ENCODE measurements at regions of chr2 and their contacts with region 1.

Region 1: DNA sequence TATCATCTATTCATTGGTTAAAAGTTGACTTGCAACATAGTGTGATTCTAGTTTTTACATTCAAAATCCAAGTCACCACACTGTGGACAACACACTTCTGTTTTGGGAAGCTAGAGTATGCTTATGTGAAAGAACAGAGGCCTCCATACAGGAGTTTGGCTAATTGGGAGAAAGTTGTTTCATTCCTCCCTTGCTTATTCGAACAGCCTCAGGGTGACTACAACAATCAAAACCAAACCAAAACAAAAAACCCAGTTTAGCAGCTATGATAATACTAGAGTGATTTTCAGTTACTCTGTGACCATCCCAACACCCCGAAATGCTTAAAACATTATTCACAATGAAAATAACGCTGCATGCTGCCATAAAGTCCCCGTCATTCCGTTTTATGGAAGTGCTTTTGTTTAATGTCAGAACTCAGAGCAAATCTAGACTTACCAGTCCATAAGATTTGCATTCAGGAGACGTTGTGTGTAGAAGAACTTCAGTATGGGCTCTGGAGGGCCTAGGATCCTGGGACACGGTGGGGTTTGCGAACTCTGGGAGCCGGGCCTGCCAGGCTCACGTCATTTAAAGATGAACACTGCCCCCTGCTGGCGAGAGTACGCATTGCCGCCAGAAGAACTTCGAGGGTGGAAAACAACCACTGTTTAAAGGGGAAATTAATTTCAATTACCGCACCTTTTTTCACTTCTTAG is 111.4 kb downstream of the FTCDNL1 start:
- H3K4me3 ChIP-seq: no peak overlapping the region
- H3K27ac ChIP-seq: no peak overlapping the region
- H3K4me1 ChIP-seq: peaks cover 9% of the 10 kb centered on the region
- CTCF ChIP-seq: peak; percentile 76

Region 2: GRCh38 chr2:199488772-199489400 is 250.7 kb before region 1 on chr2:
- CTCF ChIA-PET with region 1: interaction called, 20 read pairs
- POLR2A ChIA-PET with region 1: no interaction called
- H3K4me3 ChIP-seq: no peak overlapping the region
- H3K27ac ChIP-seq: no peak overlapping the region
- H3K4me1 ChIP-seq: no peaks in the 10 kb centered on the region
- CTCF ChIP-seq: peak; percentile 28; the same call in 1 of the 2 replicates

Region 3: DNA sequence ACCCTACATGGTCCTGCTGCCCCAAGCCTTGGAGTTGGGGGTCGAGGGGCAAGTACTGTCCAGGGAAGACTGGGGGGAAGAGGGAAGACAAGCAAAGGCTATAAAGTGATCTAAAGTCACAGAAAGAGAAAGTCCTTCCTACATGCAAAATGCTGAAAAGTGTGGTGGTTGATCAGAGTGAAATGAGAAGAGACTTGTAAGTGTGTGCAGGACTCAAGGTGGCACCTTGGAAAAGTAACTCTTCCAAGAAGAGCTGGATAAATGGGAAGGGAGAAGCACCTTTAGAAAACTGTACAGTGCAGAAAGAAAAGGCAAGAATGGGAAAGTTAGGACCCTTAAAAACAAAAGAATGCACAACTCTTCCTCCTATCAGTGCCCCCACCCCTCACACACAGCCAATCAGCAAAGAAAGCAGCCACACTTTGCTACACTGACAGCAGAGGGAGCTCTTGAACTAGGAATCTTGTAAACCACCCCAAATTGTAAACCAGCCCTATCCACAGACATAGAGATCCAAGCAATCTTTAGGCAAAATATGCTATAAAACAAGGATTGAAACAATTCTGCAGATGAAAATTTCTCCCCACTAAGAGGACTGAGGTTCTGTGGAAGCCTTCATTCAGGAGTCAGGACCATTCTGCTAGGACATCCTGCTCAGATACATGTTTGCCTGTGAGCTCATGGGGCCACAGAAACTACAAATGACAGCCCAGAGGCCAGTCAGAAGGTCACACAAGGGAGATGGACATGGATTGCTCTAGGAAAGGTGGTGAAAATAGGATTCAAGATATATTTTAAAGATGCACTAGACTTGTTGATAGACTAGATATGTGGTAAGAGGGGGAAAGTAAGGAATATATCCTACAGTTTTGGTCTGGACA is 35.0 kb before region 1 on chr2:
- CTCF ChIA-PET with region 1: interaction called, 68 read pairs
- POLR2A ChIA-PET with region 1: no interaction called
- H3K4me3 ChIP-seq: no peak overlapping the region
- H3K27ac ChIP-seq: no peak overlapping the region
- H3K4me1 ChIP-seq: no peaks in the 10 kb centered on the region
- CTCF ChIP-seq: peak; percentile 90

Region 4: GRCh38 chr2:199727801-199728200 is 11.8 kb before region 1 on chr2:
- CTCF ChIA-PET with region 1: interaction called, 10 read pairs
- POLR2A ChIA-PET with region 1: no interaction called
- H3K4me3 ChIP-seq: no peak overlapping the region
- H3K27ac ChIP-seq: no peak overlapping the region
- H3K4me1 ChIP-seq: no peaks in the 10 kb centered on the region
- CTCF ChIP-seq: no peak

Region 5: GRCh38 chr2:199861132-199861774 is 121.7 kb after region 1 on chr2:
- CTCF ChIA-PET with region 1: interaction called, 11 read pairs
- POLR2A ChIA-PET with region 1: no interaction called
- H3K4me3 ChIP-seq: no peak overlapping the region
- H3K27ac ChIP-seq: no peak overlapping the region
- H3K4me1 ChIP-seq: no peaks in the 10 kb centered on the region
- CTCF ChIP-seq: no peak

Region 6: GRCh38 chr2:200338701-200339100 is 599.1 kb after region 1 on chr2:
- CTCF ChIA-PET with region 1: no interaction called
- POLR2A ChIA-PET with region 1: no interaction called
- H3K4me3 ChIP-seq: no peak overlapping the region
- H3K27ac ChIP-seq: no peak overlapping the region
- H3K4me1 ChIP-seq: peaks cover 3% of the 10 kb centered on the region; the same call in 1 of the 2 replicates
- CTCF ChIP-seq: no peak

Measured in HEK293 (cell line).